B cell (primary cell): ENCODE measurements at regions of chr1 and their contacts with region 1.

Region 1: DNA sequence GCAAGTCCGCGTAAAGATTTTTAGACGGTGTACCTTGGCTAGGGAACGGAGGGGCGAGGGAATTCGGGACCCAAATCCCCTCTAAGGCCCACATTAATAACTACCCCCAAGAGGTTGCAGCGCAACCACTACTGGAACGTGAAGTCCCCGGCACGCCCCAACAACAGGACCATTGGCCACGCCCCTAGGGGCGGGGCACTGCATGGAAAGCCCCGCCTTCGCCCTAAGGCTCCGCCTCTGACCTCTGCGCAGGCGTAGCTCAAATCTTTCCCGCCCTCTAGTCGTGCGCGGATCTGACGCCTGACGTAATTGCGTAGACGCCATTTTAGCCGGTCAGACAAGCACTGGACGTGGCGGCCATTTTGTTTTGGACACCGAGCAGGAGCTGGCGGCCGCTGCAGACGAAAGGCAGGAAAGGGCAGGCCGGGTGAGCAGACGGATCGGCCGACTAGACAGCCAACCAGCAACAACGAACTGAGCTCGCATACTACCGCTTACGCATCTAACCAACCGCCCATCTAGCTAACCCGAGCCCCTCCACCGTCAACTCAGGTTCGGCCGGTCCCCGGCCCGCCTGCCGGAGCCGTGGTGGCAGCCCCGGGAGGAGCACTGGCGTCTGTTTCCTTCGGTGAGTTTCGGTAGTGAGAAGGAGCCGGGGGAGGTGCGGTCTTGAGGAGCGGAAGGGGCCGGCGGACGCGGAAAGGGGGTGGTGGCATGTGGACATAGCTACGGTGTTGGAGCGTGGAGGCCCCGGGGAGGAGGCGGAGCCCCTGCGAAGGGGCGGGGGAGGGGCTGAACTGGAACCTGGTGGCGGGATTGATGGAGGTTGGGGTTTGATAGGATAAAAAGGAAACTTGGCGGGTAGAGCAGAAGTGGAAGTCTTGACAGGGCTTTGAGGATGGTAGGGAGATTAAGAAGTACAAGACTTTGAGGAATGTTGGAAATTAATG is at the start of gene CHTOP:
- DNase-seq: peak; percentile 99
- ATAC-seq: peak; percentile 89
- H3K4me3 ChIP-seq: peak within 1 kb of the TSS; percentile 90 to 100 (median 99)
- H3K4me3 Mint-ChIP-seq: peak within 1 kb of the TSS; percentile 97
- H3K27ac ChIP-seq: peak within 1 kb of the TSS; percentile 97 to 99
- H3K27ac Mint-ChIP-seq: peak within 1 kb of the TSS; percentile 100
- H3K4me1 ChIP-seq: peaks cover 9 to 24% of the 10 kb centered on the region in 2 donors
- H3K4me1 Mint-ChIP-seq: peaks cover 39% of the 10 kb centered on the region
- H3K27me3 ChIP-seq: no peaks in the 10 kb centered on the region
- H3K27me3 Mint-ChIP-seq: no peaks in the 10 kb centered on the region
- CTCF ChIP-seq: no peak
- total RNA-seq, gene CHTOP: 156 TPM in 2 replicates

Region 2: DNA sequence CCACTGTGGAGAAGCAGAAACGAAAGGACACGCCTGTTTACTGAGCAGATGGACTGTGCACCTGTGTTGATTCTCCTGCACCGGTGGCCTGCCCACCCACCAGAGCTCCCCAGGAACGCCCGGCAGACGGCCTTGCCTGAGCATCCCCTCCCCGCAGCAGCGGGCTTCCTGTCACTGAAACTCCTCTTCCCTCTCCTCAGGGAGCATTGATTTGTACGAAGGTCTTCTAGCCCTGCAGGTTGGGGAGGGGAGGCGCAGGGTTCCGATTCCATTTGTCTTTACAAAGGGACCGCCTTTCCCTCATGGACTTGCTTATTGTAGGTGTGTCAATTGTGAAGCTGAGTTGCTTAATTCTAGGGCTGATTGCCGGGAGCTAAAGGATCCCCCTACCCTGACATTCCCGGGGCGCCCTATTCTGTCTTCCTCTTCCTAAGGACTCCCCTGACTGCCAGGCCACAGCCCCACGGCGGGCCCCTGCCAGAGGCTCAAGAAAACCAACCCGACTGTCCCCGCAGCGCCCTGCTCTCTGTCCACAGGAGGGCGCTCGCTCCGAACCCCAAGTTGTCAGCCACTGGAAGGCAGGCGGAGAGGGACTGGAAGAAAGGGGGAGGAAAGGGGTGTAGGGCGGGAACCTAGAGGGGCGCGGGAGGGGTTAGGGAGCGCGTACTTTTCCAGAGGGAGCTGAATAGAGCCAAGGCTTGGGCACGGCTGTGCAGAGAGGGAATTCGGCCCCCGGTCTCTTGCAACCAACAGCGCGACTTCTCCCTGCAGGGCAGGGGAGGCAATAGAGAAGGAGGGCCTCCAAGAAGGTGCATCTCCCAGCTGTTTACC is 101.0 kb before region 1 on chr1:
- CTCF ChIA-PET with region 1: interaction called, 7 read pairs
- POLR2A ChIA-PET with region 1: no interaction called
- intact Hi-C with region 1: loop called (anchors 10 kb)
- DNase-seq: peak; percentile 73
- ATAC-seq: peak; percentile 13
- H3K4me3 ChIP-seq: no peak overlapping the region
- H3K4me3 Mint-ChIP-seq: peak overlapping the region; percentile 47
- H3K27ac ChIP-seq: peak overlapping the region; percentile 2 to 26
- H3K27ac Mint-ChIP-seq: peak overlapping the region; percentile 50
- H3K4me1 ChIP-seq: peaks cover 38 to 48% of the 10 kb centered on the region in 2 donors
- H3K4me1 Mint-ChIP-seq: peaks cover 41% of the 10 kb centered on the region
- H3K27me3 ChIP-seq: no peaks in the 10 kb centered on the region
- H3K27me3 Mint-ChIP-seq: no peaks in the 10 kb centered on the region
- CTCF ChIP-seq: peak; percentile 71

Region 3: DNA sequence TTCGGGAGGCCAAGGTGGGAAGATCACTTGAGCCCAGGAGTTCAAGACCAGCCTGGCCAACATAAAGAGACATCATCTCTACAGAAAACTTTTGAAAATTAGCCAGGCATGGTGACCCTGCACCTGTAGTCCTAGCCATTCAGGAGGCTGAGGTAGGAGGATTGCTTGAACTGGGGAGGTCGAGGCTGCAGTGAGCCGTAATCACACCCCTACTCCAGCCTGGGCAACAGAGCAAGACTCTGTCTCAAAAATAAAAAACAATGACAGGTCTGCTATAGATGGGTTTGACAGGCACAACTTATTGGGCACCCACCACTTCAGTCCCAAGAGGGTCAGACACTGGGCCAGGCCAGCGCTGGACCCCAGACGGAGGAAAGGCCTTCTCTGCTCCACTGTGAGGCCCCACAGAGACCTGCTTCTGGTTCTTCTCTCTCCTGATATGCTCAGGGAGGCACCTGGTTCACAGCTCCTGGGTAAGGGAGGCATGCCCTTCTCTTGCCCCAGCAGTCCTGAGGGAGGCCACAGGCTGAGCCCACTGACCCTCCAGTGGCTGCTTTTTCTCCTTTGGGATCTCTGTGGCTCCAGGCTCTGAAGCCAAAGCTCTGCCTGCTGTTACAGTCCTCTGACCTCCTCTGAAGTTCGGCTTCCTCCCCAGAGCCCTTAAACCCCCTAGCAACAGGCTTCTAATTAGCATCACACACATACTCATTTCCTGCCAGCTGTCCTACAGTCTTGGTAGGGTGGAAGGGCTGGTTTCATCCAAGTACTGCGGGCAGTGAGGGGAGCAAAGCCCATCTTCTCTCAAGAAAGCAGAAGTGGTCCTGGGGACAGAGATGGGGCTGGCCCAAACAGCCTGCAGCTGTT is 35.5 kb before region 1 on chr1:
- CTCF ChIA-PET with region 1: no interaction called
- POLR2A ChIA-PET with region 1: interaction called, 17 read pairs
- intact Hi-C with region 1: loop called (anchors 1 kb)
- DNase-seq: peak; percentile 91
- ATAC-seq: peak; percentile 95
- H3K4me3 ChIP-seq: peak overlapping the region in 1 of 5 experiments; percentile 15
- H3K4me3 Mint-ChIP-seq: peak overlapping the region; percentile 68
- H3K27ac ChIP-seq: peak overlapping the region; percentile 94 to 97
- H3K27ac Mint-ChIP-seq: peak overlapping the region; percentile 96
- H3K4me1 ChIP-seq: peaks cover 27 to 39% of the 10 kb centered on the region in 2 donors
- H3K4me1 Mint-ChIP-seq: peaks cover 39% of the 10 kb centered on the region
- H3K27me3 ChIP-seq: no peaks in the 10 kb centered on the region
- H3K27me3 Mint-ChIP-seq: no peaks in the 10 kb centered on the region
- CTCF ChIP-seq: no peak

Region 4: GRCh38 chr1:153649863-153650235 is 15.9 kb after region 1 on chr1:
- CTCF ChIA-PET with region 1: interaction called, 3 read pairs
- POLR2A ChIA-PET with region 1: interaction called, 10 read pairs
- intact Hi-C with region 1: no loop called
- DNase-seq: no peak
- ATAC-seq: no peak
- H3K4me3 ChIP-seq: no peak overlapping the region
- H3K4me3 Mint-ChIP-seq: no peak overlapping the region
- H3K27ac ChIP-seq: peak overlapping the region in 1 of 2 donors; percentile 41
- H3K27ac Mint-ChIP-seq: peak overlapping the region; percentile 61
- H3K4me1 ChIP-seq: no peaks in the 10 kb centered on the region
- H3K4me1 Mint-ChIP-seq: no peaks in the 10 kb centered on the region
- H3K27me3 ChIP-seq: no peaks in the 10 kb centered on the region
- H3K27me3 Mint-ChIP-seq: no peaks in the 10 kb centered on the region
- CTCF ChIP-seq: no peak

Region 5: GRCh38 chr1:153658400-153659174 is 24.6 kb after region 1 on chr1 and contains the start of gene SNAPIN:
- CTCF ChIA-PET with region 1: interaction called, 3 read pairs
- POLR2A ChIA-PET with region 1: interaction called, 8 read pairs
- intact Hi-C with region 1: loop called (anchors 1 kb)
- DNase-seq: peak; percentile 93
- ATAC-seq: peak; percentile 99
- H3K4me3 ChIP-seq: peak within 1 kb of the TSS; percentile 77 to 87 (median 82)
- H3K4me3 Mint-ChIP-seq: peak within 1 kb of the TSS; percentile 96
- H3K27ac ChIP-seq: peak within 1 kb of the TSS; percentile 68 to 83
- H3K27ac Mint-ChIP-seq: peak within 1 kb of the TSS; percentile 91
- H3K4me1 ChIP-seq: peaks cover 5 to 15% of the 10 kb centered on the region in 2 donors
- H3K4me1 Mint-ChIP-seq: peaks cover 12% of the 10 kb centered on the region
- H3K27me3 ChIP-seq: no peaks in the 10 kb centered on the region
- H3K27me3 Mint-ChIP-seq: no peaks in the 10 kb centered on the region
- CTCF ChIP-seq: no peak
- total RNA-seq, gene SNAPIN: 37.6 and 39.4 TPM in 2 replicates

Region 6: GRCh38 chr1:153727463-153728304 is 93.7 kb after region 1 on chr1 and contains the start of gene INTS3:
- CTCF ChIA-PET with region 1: no interaction called
- POLR2A ChIA-PET with region 1: interaction called, 15 read pairs
- intact Hi-C with region 1: loop called (anchors 1 kb)
- DNase-seq: peak; percentile 99
- ATAC-seq: peak; percentile 99
- H3K4me3 ChIP-seq: peak within 1 kb of the TSS; percentile 78 to 99 (median 91)
- H3K4me3 Mint-ChIP-seq: peak within 1 kb of the TSS; percentile 84
- H3K27ac ChIP-seq: peak within 1 kb of the TSS; percentile 97 to 98
- H3K27ac Mint-ChIP-seq: peak within 1 kb of the TSS; percentile 86
- H3K4me1 ChIP-seq: peaks cover 9 to 16% of the 10 kb centered on the region in 2 donors
- H3K4me1 Mint-ChIP-seq: peaks cover 36% of the 10 kb centered on the region
- H3K27me3 ChIP-seq: no peaks in the 10 kb centered on the region
- H3K27me3 Mint-ChIP-seq: no peaks in the 10 kb centered on the region
- CTCF ChIP-seq: no peak
- total RNA-seq, gene INTS3: 69.1 and 69.3 TPM in 2 replicates

Region 7: DNA sequence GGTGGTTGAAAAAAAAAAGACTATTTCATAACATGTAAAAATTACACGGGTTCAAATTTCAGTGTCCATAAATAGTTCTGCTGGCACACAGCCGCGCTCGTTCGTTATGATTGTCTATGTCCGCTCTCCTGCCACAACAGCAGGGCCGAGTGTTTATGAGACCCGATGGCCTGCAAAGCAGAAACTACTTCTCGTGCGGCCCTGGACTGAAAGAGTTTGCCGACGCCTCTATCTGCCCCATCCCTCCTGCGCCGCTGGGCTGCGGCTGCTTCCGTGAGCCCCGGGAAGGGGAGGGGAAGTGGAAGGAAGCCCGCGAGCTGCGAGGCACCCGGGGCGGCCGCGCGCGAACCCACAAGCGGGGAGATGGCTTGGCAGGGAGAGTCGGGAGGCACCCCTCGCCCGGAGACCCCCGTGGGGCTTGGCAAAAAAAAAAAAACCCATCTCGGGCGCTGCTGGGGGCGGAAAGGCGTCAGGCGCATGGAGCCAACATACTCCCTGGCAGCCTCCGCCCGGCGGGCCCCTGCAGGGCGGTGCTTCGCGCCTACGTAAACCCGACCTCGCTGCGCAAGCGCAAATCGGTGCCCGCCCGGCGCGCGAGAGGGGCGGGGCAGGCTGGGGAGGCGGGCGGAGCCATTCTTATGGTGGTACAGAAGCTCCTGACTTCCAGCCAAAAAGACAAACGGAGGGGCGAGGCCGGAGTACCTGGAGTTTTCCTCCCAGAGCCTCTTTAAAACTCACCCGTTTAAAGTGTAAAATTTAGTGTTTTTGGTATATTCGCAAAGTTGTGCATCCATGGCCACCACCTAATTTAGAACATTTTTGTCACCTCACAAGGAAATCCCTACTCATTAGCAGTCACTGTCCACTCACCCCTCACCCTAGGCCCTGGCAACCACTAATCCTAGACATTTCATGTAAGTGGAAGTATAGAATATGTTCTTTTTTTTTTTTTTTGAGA is 149.5 kb after region 1 on chr1:
- CTCF ChIA-PET with region 1: no interaction called
- POLR2A ChIA-PET with region 1: interaction called, 6 read pairs
- intact Hi-C with region 1: loop called (anchors 1 kb)
- DNase-seq: peak; percentile 95
- ATAC-seq: peak; percentile 97
- H3K4me3 ChIP-seq: peak overlapping the region; percentile 44 to 89 (median 76)
- H3K4me3 Mint-ChIP-seq: peak overlapping the region; percentile 97
- H3K27ac ChIP-seq: peak overlapping the region; percentile 94 to 95
- H3K27ac Mint-ChIP-seq: peak overlapping the region; percentile 93
- H3K4me1 ChIP-seq: peaks cover 7 to 23% of the 10 kb centered on the region in 2 donors
- H3K4me1 Mint-ChIP-seq: peaks cover 18% of the 10 kb centered on the region
- H3K27me3 ChIP-seq: no peaks in the 10 kb centered on the region
- H3K27me3 Mint-ChIP-seq: no peaks in the 10 kb centered on the region
- CTCF ChIP-seq: no peak